Testis (tissue), 5 donors: ENCODE measurements at regions of chr3 and their contacts with region 1.

Region 1: GRCh38 chr3:186534113-186534669 is 10.0 kb downstream of the CRYGS start:
- DNase-seq: no peak
- H3K4me3 ChIP-seq: no peak overlapping the region
- H3K27ac ChIP-seq: no peak overlapping the region
- H3K4me1 ChIP-seq: no peaks in the 10 kb centered on the region
- H3K27me3 ChIP-seq: no peaks in the 10 kb centered on the region
- CTCF ChIP-seq: no peak
- POLR2A ChIP-seq: no peak

Region 2: GRCh38 chr3:186259612-186260383 is 274.4 kb before region 1 on chr3:
- intact Hi-C with region 1: loop called (anchors 10 kb)
- DNase-seq: peak; percentile 79
- H3K4me3 ChIP-seq: no peak overlapping the region
- H3K27ac ChIP-seq: no peak overlapping the region
- H3K4me1 ChIP-seq: no peaks in the 10 kb centered on the region
- H3K27me3 ChIP-seq: no peaks in the 10 kb centered on the region
- CTCF ChIP-seq: peak; percentile 24 to 72 (median 53)
- POLR2A ChIP-seq: no peak

Region 3: GRCh38 chr3:186374376-186374775 is 159.8 kb before region 1 on chr3:
- intact Hi-C with region 1: no loop called
- DNase-seq: no peak
- H3K4me3 ChIP-seq: no peak overlapping the region
- H3K27ac ChIP-seq: no peak overlapping the region
- H3K4me1 ChIP-seq: no peaks in the 10 kb centered on the region
- H3K27me3 ChIP-seq: no peaks in the 10 kb centered on the region
- CTCF ChIP-seq: no peak
- POLR2A ChIP-seq: no peak